Activated T-helper 2 cell treated with anti-CD3 and anti-CD28 coated beads, Interferon-gamma antibody, Interleukin-2, Interleukin-4, amounts not matched to agents 10 μg/mL and 5 μg/mL and 100 μg/mL, durations not matched to agents 14 hours and 24 hours and 36 hours (primary cell): ENCODE measurements at regions of chr17 and their contacts with region 1.

Region 1: DNA sequence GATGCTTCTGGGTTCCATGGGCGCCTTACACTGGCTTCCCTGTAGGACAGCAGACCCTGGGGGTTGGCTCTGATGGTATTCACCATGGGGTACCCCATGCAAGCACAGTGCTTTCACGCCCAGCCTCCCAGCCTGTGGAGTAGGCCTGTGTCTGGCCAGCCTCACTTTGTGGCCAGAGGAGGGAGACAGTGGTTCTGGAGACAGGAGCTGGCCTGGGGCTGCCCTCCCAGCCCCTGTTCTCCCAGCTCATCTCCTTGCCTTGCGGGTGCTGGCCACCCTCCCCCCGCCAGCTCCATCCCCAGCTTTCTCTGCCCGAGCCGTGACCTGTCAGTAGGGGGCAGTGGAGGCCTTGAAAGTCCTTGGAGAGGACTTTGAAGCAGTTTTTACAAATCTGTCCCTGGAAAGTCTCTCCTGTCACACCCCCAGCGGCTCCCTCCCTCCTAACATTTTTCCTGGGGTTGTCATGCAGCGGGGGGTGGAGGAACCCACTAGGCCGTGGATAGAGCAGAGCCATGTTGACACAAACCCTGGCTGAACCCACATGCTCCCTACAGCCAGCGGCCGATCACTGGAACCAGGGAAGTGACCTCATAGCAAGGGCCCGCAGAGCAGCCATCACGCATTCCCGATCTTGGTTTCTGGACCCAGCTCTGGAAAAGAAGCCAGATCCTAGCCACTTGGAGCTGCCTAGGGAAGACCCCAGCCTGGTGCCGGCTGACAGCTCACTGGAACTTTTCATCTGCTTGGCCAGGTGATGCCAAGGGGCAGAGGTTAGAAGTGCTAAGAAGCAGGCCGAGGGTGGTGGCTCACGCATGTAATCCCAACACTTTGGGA is 289.4 kb downstream of the SEC14L1 start:
- DNase-seq: peak; percentile 68
- H3K4me3 Mint-ChIP-seq: no peak overlapping the region
- H3K27ac Mint-ChIP-seq: no peak overlapping the region
- H3K4me1 Mint-ChIP-seq: peaks cover 62% of the 10 kb centered on the region
- H3K27me3 Mint-ChIP-seq: no peaks in the 10 kb centered on the region

Region 2: GRCh38 chr17:77494664-77495435 is 64.7 kb after region 1 on chr17:
- intact Hi-C with region 1: loop called (anchors 1 kb)
- DNase-seq: peak; percentile 56
- H3K4me3 Mint-ChIP-seq: no peak overlapping the region
- H3K27ac Mint-ChIP-seq: peak overlapping the region; percentile 31
- H3K4me1 Mint-ChIP-seq: peaks cover 12% of the 10 kb centered on the region
- H3K27me3 Mint-ChIP-seq: no peaks in the 10 kb centered on the region